ENCODE measurements at regions of chr1 and their contacts with region 1.

Region 1: GRCh38 chr1:206734499-206735142 is 36.0 kb upstream of the IL19 start:
- DNase-seq: peak; percentile 74
- ATAC-seq: peak; percentile 69
- H3K4me3 Mint-ChIP-seq: no peak overlapping the region
- H3K27ac Mint-ChIP-seq: peak overlapping the region; percentile 24
- H3K4me1 Mint-ChIP-seq: peaks cover 43% of the 10 kb centered on the region
- H3K27me3 Mint-ChIP-seq: no peaks in the 10 kb centered on the region
- CTCF ChIP-seq: peak; percentile 41

Region 2: DNA sequence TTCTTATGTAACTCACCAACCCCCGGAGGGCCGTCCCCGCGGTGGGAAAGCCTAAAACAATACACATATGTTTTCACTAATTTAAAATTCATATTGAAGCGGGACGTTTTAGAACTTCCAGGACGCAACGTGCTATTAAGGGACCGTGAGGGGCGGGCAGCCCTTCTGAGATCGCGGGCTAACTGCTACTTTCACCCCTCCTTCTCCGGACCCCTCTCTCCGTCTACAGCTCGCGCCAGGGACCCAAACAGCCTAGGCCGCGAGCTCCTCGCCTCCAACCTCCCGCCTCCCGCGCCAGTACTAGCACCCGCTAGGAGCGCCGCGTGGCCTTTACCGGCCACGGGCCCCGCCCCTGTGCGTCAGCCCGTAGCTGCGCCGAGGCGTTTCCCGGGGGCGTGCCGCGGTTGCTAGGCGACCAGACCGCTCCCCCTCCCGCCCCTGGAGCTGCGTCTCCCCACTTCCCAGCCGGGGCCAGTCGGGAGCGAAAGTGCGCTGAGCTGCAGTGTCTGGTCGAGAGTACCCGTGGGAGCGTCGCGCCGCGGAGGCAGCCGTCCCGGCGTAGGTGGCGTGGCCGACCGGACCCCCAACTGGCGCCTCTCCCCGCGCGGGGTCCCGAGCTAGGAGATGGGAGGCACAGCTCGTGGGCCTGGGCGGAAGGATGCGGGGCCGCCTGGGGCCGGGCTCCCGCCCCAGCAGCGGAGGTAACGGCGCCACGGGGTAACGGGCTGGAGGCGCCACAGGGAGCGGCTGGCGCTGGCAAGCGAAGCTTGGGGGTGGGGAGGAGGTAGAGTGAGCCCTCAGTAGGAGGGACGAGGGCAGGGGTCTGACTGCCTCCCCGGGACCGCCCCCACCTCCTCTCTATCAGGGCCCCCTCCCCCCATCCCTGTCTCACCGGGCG is 99.3 kb before region 1 on chr1 and contains the start of gene DYRK3:
- CTCF ChIA-PET with region 1: interaction called, 10 read pairs
- POLR2A ChIA-PET with region 1: interaction called, 3 read pairs
- intact Hi-C with region 1: no loop called
- DNase-seq: peak; percentile 86
- ATAC-seq: peak; percentile 91
- H3K4me3 Mint-ChIP-seq: peak within 1 kb of the TSS; percentile 89
- H3K27ac Mint-ChIP-seq: peak within 1 kb of the TSS; percentile 76
- H3K4me1 Mint-ChIP-seq: peaks cover 24% of the 10 kb centered on the region
- H3K27me3 Mint-ChIP-seq: peaks cover 2% of the 10 kb centered on the region
- CTCF ChIP-seq: no peak
- total RNA-seq, gene DYRK3: 0.33 and 0.37 TPM in 2 replicates

Region 3: DNA sequence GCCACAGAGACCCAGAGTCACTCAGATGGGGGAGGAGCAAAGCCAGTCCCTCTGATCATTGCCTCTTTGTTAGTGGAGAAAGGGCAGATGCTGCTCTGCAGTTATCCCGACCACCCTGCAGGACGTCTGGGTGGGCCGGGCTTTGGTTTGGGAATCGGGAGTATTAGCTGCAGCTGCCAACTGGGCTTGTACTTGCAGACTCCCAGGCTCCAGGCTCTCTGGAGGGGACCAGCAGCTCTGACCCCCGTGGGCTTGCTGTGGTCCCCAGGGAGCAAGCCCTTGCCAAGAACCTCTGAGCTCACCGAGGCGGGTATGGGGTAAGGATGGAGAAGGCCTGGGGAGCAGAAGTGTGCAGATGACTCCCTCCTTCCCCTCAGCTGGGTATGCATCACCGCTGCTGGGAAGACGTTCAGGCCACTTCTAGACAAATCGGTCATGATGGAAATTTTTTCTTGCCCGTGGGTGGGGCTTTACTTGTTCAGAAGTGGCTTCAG is 28.3 kb before region 1 on chr1:
- CTCF ChIA-PET with region 1: no interaction called
- POLR2A ChIA-PET with region 1: no interaction called
- intact Hi-C with region 1: no loop called
- DNase-seq: no peak
- ATAC-seq: peak; percentile 14
- H3K4me3 Mint-ChIP-seq: peak overlapping the region; percentile 18
- H3K27ac Mint-ChIP-seq: peak overlapping the region; percentile 33
- H3K4me1 Mint-ChIP-seq: peaks cover 91% of the 10 kb centered on the region
- H3K27me3 Mint-ChIP-seq: no peaks in the 10 kb centered on the region
- CTCF ChIP-seq: no peak

Region 4: GRCh38 chr1:206784471-206784903 is 49.9 kb after region 1 on chr1:
- CTCF ChIA-PET with region 1: interaction called, 14 read pairs
- POLR2A ChIA-PET with region 1: interaction called, 18 read pairs
- intact Hi-C with region 1: loop called (anchors 1 kb)
- DNase-seq: no peak
- ATAC-seq: peak; percentile 58
- H3K4me3 Mint-ChIP-seq: peak overlapping the region; percentile 77
- H3K27ac Mint-ChIP-seq: peak overlapping the region; percentile 88
- H3K4me1 Mint-ChIP-seq: peaks cover 52% of the 10 kb centered on the region
- H3K27me3 Mint-ChIP-seq: no peaks in the 10 kb centered on the region
- CTCF ChIP-seq: no peak

Region 5: GRCh38 chr1:206803221-206803730 is 68.7 kb after region 1 on chr1:
- CTCF ChIA-PET with region 1: interaction called, 252 read pairs
- POLR2A ChIA-PET with region 1: interaction called, 18 read pairs
- intact Hi-C with region 1: loop called (anchors 1 kb)
- DNase-seq: no peak
- ATAC-seq: peak; percentile 91
- H3K4me3 Mint-ChIP-seq: peak overlapping the region; percentile 8
- H3K27ac Mint-ChIP-seq: peak overlapping the region; percentile 74
- H3K4me1 Mint-ChIP-seq: peaks cover 39% of the 10 kb centered on the region
- H3K27me3 Mint-ChIP-seq: no peaks in the 10 kb centered on the region
- CTCF ChIP-seq: no peak

Region 6: DNA sequence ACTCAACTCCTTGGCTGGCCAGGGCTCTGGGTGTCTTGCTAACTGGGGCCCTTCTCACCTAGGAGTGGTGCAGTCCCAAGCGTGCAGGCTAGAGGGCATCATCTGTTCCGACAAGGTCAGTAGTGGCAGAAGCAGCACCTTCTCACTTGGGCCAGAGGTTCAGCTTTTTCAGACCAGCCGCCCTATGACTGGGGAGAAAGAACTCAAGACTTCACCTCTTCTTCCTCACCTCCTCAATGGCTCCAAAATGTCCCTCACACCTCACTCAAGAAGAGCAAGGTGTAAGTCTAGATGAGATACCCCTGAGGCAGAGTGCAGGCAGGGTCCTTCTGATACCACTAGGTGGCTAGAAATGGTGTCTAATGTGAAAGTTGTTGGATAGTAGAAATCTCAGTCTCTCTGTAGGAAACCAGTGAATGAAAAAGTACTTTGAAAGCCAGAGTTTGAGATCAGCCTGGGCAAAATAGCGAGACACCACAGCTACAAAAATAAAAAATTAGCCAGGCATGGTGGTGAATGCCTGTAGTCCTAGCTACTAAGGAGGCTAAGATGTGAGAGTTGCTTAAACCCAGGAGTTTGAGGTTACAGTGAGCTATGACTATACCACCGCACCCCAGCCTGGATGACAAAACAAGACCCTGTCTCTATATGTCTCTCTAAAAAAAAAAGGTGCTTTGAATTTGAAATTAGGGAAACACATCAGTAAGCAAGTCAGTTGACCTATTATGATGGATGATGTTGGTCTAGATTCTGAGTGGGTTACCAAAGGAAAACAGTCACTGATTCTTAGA is 122.2 kb after region 1 on chr1:
- CTCF ChIA-PET with region 1: no interaction called
- POLR2A ChIA-PET with region 1: no interaction called
- intact Hi-C with region 1: loop called (anchors 2 kb)
- DNase-seq: no peak
- ATAC-seq: peak; percentile 78
- H3K4me3 Mint-ChIP-seq: no peak overlapping the region
- H3K27ac Mint-ChIP-seq: no peak overlapping the region
- H3K4me1 Mint-ChIP-seq: peaks cover 6% of the 10 kb centered on the region
- H3K27me3 Mint-ChIP-seq: peaks cover 12% of the 10 kb centered on the region
- CTCF ChIP-seq: no peak

Region 7: GRCh38 chr1:206912445-206913095 is 177.9 kb after region 1 on chr1:
- CTCF ChIA-PET with region 1: interaction called, 126 read pairs
- POLR2A ChIA-PET with region 1: interaction called, 4 read pairs
- intact Hi-C with region 1: loop called (anchors 1 kb)
- DNase-seq: no peak
- ATAC-seq: peak; percentile 54
- H3K4me3 Mint-ChIP-seq: peak overlapping the region; percentile 42
- H3K27ac Mint-ChIP-seq: no peak overlapping the region
- H3K4me1 Mint-ChIP-seq: peaks cover 93% of the 10 kb centered on the region
- H3K27me3 Mint-ChIP-seq: no peaks in the 10 kb centered on the region
- CTCF ChIP-seq: peak; percentile 72

Measured in activated B cell treated with CpG ODN at 0.5 μM for 24 hours (primary cell).